ENCODE measurements at regions of chr6 and their contacts with region 1.

Region 1: DNA sequence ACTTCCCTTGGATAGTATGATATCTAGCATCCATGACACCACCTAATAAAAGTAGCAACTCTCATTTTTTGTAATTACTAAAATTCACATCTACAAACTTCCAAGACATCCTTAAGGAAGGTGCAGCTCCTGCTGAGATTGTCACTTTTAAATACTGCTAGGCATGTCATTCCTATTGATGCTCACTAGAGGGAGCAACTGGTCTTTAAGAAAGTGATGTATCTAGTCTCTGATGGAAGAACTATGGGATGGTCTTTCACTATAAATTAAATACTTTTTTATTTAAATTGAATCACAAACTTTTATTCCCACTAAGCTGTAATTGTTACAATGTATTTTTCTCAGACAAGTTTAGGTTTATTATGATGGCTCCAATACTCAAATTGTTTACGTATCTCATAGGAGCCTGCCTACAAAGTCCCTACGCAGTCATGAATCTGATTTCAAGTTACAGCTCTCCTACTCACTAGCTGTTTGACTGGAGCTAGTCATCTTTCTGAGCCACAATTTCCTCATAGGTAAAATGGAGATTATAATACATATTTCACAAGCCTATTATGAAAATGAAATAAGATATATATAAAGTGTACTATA is 8.1 kb upstream of the TSPYL1 start:
- DNase-seq: peak; percentile 61
- ATAC-seq: peak; percentile 94
- H3K4me3 ChIP-seq: no peak overlapping the region
- H3K27ac ChIP-seq: no peak overlapping the region
- H3K4me1 ChIP-seq: no peaks in the 10 kb centered on the region
- H3K27me3 ChIP-seq: peaks cover 11% of the 10 kb centered on the region
- CTCF ChIP-seq: peak; percentile 91; the same call in 1 of the 2 replicates

Region 2: DNA sequence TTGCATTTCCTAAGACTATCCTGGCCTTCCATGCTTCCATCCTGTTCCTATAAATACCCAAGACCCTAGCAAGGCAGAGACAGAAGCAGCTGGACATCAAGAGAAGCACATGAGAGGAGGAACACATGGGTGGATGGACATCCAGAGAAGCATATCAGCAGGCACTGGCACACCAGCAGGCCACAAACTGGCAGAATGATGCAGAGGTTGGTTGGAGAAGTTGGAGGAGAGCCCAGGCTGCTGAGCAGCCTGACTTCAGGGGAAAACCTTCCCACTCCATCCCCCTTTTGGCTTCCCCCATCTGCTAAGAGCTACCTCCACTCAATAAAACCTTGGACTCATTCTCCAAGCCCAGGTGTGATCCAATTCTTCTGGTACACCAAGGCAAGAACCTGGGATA is 559.6 kb before region 1 on chr6:
- CTCF ChIA-PET with region 1: no interaction called
- POLR2A ChIA-PET with region 1: no interaction called
- in situ Hi-C with region 1: no loop called
- intact Hi-C with region 1: no loop called
- DNase-seq: no peak
- ATAC-seq: no peak
- H3K4me3 ChIP-seq: no peak overlapping the region
- H3K27ac ChIP-seq: no peak overlapping the region
- H3K4me1 ChIP-seq: no peaks in the 10 kb centered on the region
- H3K27me3 ChIP-seq: no peaks in the 10 kb centered on the region
- CTCF ChIP-seq: no peak

Region 3: GRCh38 chr6:116461932-116462885 is 174.4 kb after region 1 on chr6:
- CTCF ChIA-PET with region 1: no interaction called
- POLR2A ChIA-PET with region 1: no interaction called
- in situ Hi-C with region 1: no loop called
- intact Hi-C with region 1: loop called (anchors 5 kb)
- DNase-seq: no peak
- ATAC-seq: peak; percentile 88
- H3K4me3 ChIP-seq: peak overlapping the region; percentile 36 to 52
- H3K27ac ChIP-seq: no peak overlapping the region
- H3K4me1 ChIP-seq: 0 out of 2 replicates have a peak, but pooled peaks cover 4% of the 10 kb centered on the region
- H3K27me3 ChIP-seq: peaks cover 52% of the 10 kb centered on the region
- CTCF ChIP-seq: no peak

Region 4: DNA sequence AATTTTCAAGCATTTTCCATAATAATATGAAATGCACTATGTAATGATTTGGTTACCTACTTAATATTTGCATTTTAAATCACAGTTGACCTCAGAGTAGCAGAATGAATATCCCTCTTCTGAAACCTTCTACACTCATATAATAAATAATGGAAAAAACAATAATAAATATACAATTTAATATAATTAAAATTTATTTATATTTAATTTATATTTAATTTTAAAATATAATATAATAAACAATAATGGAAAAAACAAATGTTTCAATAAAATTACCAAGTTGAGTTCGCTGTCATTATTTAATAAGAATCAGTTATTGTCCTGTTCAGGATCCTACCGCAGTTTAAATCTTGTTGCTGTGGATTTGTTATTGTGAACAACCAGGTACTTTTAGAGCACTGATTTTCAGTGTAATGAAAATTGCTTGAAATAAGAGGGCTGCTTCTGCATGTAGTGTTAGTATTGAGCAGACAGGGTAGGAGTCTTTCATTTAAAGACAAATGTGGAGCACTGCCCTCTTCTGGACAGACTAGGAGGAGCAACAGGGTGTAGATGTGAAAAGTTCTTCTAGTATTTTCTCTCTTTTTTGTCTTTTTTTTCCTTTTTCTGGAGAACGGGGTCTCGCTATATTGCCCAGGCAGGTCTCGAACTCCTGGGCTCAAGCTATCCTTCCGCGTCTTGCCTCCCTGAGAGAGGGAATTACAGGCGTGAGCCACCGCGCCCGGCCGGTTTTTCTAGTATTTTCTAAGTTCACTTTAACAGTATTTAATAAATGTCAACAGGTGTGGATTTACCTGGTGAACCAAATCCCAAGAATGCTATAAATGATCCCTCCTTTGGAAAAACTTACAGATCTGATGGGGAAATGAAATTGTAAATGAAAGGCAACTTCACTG is 244.1 kb after region 1 on chr6:
- CTCF ChIA-PET with region 1: interaction called, 13 read pairs
- POLR2A ChIA-PET with region 1: no interaction called
- in situ Hi-C with region 1: no loop called
- intact Hi-C with region 1: loop called (anchors 1 kb)
- DNase-seq: peak; percentile 52
- ATAC-seq: peak; percentile 90
- H3K4me3 ChIP-seq: no peak overlapping the region
- H3K27ac ChIP-seq: no peak overlapping the region
- H3K4me1 ChIP-seq: no peaks in the 10 kb centered on the region
- H3K27me3 ChIP-seq: peaks cover 41% of the 10 kb centered on the region
- CTCF ChIP-seq: peak; percentile 87

Region 5: GRCh38 chr6:116557869-116558473 is 270.2 kb after region 1 on chr6:
- CTCF ChIA-PET with region 1: interaction called, 8 read pairs
- POLR2A ChIA-PET with region 1: no interaction called
- in situ Hi-C with region 1: no loop called
- intact Hi-C with region 1: loop called (anchors 5 kb)
- DNase-seq: peak; percentile 51
- ATAC-seq: 0 out of 2 replicates have a peak, but pooled peaks have one; percentile 13
- H3K4me3 ChIP-seq: no peak overlapping the region
- H3K27ac ChIP-seq: no peak overlapping the region
- H3K4me1 ChIP-seq: no peaks in the 10 kb centered on the region; the same call in 1 of the 2 replicates
- H3K27me3 ChIP-seq: peaks cover 34% of the 10 kb centered on the region
- CTCF ChIP-seq: no peak